ENCODE measurements at regions of chr15 and their contacts with region 1.

Region 1: DNA sequence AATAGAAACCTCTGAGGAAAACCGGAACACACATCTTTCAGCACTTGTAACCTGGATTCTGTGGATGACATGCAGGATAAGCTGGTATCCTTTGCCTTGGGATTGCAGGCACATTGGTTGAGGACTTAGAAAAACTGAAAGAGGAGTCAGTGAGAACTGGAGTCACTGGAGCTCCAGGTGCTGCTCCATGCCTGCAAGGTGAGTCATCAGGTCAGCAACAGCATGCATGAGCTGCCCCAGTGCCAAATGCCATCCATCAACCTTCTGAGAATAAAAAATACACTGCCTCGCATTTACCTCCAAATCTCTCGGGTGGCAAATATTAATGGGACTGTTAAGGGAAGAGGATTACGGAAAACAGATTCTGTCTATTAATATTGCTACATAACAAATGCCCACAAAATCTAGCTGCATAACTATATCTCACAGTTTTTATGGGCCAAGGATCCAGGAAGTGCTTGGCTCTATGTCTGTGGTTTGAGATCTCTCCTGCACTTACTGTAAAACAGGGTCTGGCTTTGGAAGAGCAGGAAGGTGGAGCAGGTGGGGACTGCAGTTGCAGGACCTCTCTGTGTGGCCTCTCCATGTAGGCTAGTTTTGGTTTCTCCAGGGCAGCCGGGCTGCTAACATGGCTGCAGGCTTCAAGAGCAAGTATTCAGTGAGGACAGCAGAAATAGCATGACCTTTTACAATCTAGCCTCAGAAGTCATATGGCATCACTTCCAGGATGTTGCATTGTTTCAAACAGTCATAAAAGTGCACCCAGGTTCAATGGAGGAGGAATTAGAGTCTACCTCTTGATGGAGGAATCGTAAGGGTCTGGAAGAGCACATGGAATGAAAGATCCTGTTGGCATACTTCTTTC is 728.9 kb downstream of the NTRK3 start:
- DNase-seq: peak in 1 of 2 donors; percentile 25
- ATAC-seq: peak; percentile 76 to 81
- H3K4me3 ChIP-seq: no peak overlapping the region
- H3K27ac ChIP-seq: no peak overlapping the region
- H3K4me1 ChIP-seq: no peaks in the 10 kb centered on the region
- H3K27me3 ChIP-seq: no peaks in the 10 kb centered on the region
- CTCF ChIP-seq: no peak
- POLR2A ChIP-seq: no peak

Region 2: GRCh38 chr15:87433871-87434270 is 93.8 kb before region 1 on chr15:
- in situ Hi-C with region 1: loop called in 1 of 4 experiments (anchors 25 kb)
- intact Hi-C with region 1: no loop called
- DNase-seq: no peak
- ATAC-seq: no peak
- H3K4me3 ChIP-seq: no peak overlapping the region
- H3K27ac ChIP-seq: no peak overlapping the region
- H3K4me1 ChIP-seq: peaks cover 0 to 8% of the 10 kb centered on the region in 2 donors
- H3K27me3 ChIP-seq: no peaks in the 10 kb centered on the region
- CTCF ChIP-seq: no peak
- POLR2A ChIP-seq: no peak

Region 3: DNA sequence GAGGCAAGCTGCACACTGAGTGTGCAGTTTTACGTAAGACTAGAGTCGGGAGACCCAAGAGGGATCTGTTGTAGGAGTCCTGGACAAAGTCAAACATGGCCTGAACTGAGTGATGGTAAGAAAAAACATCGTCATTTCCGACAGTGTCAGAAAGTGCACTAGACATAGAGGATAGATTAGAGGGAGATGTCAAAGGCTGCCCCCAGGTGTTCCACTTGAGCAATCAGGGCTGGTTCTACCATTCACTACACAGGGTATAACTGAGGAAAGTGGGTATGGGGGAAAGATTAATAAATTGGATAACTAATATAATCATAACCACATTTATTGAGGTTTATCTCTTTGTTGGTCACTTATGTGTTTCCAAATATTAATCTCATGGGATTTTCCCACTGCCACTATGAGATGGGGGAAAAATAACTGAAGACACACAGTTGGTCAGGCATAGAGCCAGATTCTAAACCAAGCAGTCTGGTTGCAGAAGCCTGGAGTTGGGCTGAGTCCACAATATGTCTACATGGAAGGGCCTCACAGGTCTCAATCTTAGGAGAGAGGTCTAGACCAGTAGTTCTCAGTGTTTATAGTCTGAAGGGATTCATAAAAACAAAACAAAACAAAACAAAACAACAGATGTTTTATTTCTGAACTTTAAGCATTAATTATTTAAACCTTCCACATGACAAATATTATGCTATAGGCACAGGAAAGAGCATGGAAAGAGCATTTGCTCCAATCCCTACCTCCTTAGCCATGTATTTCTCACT is 37.6 kb before region 1 on chr15:
- in situ Hi-C with region 1: loop called in 1 of 4 experiments (anchors 5 kb)
- intact Hi-C with region 1: no loop called
- DNase-seq: no peak
- ATAC-seq: no peak
- H3K4me3 ChIP-seq: no peak overlapping the region
- H3K27ac ChIP-seq: no peak overlapping the region
- H3K4me1 ChIP-seq: peaks cover 9 to 20% of the 10 kb centered on the region in 2 donors
- H3K27me3 ChIP-seq: no peaks in the 10 kb centered on the region
- CTCF ChIP-seq: no peak
- POLR2A ChIP-seq: no peak

Region 4: DNA sequence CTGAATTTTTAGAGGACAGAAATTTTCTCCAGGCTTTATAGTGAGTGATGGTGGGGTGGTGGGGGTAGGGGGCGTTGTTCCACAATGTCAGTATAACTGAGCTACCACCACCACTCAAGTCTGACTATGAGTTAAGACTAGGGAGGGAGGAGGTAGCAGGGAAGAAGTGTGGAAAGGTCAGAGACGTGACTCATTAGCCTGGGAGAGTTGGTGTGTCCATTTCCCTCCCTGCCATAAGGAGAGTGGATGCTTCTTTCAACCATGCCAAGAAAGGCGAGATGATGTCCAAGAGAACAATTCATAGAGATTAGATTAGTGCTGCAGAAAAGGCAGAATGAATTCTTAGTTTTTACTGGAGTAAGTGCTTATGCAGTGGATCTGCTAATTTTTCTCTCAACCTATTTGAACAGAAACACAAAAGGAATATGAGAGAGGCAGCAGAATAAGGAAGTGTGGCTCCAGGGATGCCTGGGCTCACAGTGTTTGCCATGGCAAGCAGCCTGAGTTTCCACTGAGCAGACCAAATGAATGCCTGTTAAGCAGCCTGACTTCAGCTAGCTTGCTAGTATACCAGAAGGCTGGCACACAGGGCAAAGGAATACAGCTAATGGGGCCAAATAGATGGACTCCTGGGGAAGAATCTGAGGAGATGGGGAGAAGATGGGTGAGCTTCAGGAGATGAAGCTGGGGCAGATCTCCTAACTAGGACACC is 20.0 kb after region 1 on chr15:
- in situ Hi-C with region 1: no loop called
- intact Hi-C with region 1: no loop called
- DNase-seq: no peak
- ATAC-seq: peak; percentile 84 to 90
- H3K4me3 ChIP-seq: no peak overlapping the region
- H3K27ac ChIP-seq: peak overlapping the region; percentile 57 to 78 (median 68)
- H3K4me1 ChIP-seq: peaks cover 0 to 8% of the 10 kb centered on the region in 2 donors
- H3K27me3 ChIP-seq: no peaks in the 10 kb centered on the region
- CTCF ChIP-seq: no peak
- POLR2A ChIP-seq: no peak

Region 5: DNA sequence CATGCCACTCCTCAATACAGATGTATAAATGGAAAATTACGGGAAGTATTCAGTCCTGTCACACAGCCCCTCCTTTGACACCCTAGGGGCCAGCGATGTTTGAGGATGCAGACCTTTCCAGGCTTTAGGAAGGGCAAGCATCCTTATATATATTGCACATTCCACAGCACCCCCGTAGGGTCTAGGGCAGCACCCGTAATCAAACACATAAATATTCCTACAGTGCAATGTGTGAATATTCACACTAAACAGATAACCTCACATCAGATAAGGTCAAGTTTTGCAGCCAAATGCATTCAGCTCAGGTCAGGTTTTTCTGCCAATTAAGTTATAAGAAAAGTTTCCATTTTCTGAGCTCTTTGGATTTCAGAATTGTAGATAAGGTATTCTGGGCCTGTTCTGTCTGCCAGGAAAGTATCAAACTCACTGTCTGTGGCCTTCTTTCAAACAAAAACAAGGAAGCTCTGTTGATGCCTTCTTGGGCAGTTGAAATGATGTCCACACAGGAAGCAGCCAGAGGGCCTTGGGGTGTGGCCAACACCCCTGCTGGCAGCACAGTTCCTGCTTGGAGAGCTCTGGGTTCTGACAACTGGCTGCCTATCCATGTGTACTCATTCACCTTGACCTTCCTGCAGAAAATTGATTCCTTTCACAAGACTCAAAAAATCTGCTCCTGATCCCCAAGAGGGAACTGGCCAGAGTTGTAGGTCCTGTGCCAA is 301.8 kb after region 1 on chr15:
- in situ Hi-C with region 1: no loop called
- intact Hi-C with region 1: no loop called
- DNase-seq: peak in 1 of 2 donors; percentile 17
- ATAC-seq: no peak
- H3K4me3 ChIP-seq: no peak overlapping the region
- H3K27ac ChIP-seq: no peak overlapping the region
- H3K4me1 ChIP-seq: no peaks in the 10 kb centered on the region
- H3K27me3 ChIP-seq: no peaks in the 10 kb centered on the region
- CTCF ChIP-seq: no peak
- POLR2A ChIP-seq: no peak